Right ventricle myocardium inferior (tissue), 1 donor: ENCODE measurements at regions of chr9 and their contacts with region 1.

Region 1: GRCh38 chr9:35489313-35490154 is at the start of gene RUSC2:
- DNase-seq: peak; percentile 90
- ATAC-seq: peak; percentile 90
- total RNA-seq, gene RUSC2: 25.1 TPM

Region 2: DNA sequence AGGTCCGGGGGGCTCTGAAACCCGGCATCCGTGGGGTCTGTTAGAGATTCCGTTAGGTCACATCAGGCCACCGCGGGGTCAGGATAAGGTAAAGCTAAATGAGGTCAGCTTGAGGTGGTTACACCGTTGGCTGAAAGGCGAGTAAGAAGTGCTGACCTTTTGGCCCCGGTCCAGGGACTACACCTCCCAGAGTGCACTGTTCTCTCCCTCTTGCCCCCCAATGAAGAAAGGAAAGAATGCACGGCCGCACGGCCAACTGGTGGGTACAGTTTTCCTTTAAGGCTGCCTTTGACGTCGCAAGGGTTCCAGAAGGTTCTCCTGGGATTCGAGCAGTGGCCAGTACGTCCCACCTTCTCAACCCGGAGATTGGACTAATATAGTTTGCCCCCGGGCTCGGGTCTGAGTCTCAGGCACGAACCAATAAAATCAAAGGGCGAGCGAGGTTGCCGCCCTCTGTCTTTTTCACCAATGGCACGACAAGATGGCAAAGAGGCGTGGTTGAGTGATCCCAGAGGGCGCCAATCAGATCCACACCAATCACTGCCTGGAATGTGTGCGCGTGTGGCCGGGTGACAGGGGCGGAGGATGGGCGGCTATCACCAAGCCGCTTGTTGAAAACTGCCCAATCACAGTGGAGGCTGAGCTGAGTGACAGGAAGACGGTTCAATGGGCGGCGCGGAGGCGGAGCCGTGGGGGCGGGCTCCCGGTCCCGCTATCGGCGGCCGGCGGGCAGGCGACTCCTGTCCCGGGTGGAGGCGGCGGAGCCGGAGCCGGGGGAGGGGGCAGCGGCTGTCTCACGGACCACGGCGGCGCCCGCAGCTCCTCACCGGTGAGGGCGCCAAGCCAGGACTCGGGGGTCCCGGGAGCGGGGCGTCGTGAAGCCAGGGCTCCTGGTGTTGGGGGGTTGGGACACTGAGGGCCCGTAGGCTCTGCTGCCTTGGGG is 500.3 kb before region 1 on chr9 and contains the start of gene DNAJB5:
- intact Hi-C with region 1: no loop called
- DNase-seq: peak; percentile 99
- ATAC-seq: peak; percentile 89
- total RNA-seq, gene DNAJB5: 66.5 TPM

Region 3: GRCh38 chr9:35510745-35511428 is 21.4 kb after region 1 on chr9:
- intact Hi-C with region 1: loop called (anchors 2 kb)
- DNase-seq: peak; percentile 83
- ATAC-seq: peak; percentile 95

Region 4: GRCh38 chr9:35553670-35554543 is 64.4 kb after region 1 on chr9:
- intact Hi-C with region 1: loop called (anchors 1 kb)
- DNase-seq: no peak
- ATAC-seq: peak; percentile 90

Region 5: GRCh38 chr9:35628389-35628991 is 139.0 kb after region 1 on chr9:
- intact Hi-C with region 1: no loop called
- DNase-seq: no peak
- ATAC-seq: no peak